Body of pancreas (tissue), 4 donors: ENCODE measurements at regions of chr15 and their contacts with region 1.

Region 1: DNA sequence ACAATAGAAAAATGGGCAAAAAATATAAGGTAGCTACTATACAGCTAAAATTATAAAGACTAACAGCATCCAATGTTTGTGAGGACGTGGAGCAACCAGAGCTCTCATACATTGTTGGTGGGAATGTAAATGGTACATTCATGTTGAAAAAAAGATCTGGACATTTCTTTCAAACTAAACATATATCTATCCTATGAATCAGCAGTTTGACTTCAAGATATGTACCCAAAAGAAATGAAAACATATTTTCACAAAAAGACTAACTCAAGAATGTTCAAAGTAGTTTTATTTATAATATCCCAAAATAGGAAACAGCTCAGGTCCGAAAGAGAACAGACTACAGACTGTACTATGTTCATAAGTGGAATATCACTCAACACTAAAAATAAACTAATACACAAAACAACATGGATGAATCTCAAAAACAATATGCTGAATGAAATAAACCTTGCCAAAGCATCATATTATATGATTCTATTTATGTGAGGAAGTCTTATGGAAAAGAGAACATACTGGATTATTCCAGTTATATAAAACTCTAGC is 8.8 kb upstream of the TTBK2 start:
- DNase-seq: no peak
- ATAC-seq: no peak
- H3K4me3 ChIP-seq: no peak overlapping the region
- H3K27ac ChIP-seq: no peak overlapping the region
- H3K4me1 ChIP-seq: no peaks in the 10 kb centered on the region
- H3K27me3 ChIP-seq: no peaks in the 10 kb centered on the region
- CTCF ChIP-seq: no peak
- POLR2A ChIP-seq: no peak

Region 2: DNA sequence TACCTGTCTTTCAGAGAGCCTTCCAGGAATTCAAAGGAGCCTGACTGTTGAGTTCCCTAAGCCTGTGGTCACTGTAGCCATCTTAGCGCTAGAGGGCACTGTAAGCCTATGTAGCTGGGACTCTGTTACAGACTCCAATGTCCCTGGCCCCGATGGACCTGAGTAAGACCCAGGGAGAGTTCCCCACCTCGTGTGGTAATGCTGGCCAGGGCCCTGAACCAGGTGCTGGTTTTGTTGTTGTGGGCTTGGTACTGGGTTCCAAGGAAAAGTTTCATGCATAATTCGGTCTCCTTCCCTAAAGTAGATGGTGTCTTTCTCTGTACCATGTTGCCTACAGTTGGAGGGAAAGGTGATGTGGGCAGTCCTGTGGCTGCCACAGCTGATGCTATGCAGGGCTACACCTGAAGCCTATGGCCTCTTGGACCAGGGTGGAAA is 224.9 kb before region 1 on chr15:
- intact Hi-C with region 1: loop called (anchors 5 kb)
- DNase-seq: peak; percentile 78 to 83 (median 80)
- ATAC-seq: peak; percentile 95
- H3K4me3 ChIP-seq: no peak overlapping the region
- H3K27ac ChIP-seq: no peak overlapping the region
- H3K4me1 ChIP-seq: no peaks in the 10 kb centered on the region
- H3K27me3 ChIP-seq: no peaks in the 10 kb centered on the region
- CTCF ChIP-seq: peak; percentile 77 to 89 (median 86)
- POLR2A ChIP-seq: no peak

Region 3: GRCh38 chr15:42808913-42809312 is 120.5 kb before region 1 on chr15:
- intact Hi-C with region 1: no loop called
- DNase-seq: no peak
- ATAC-seq: no peak
- H3K4me3 ChIP-seq: no peak overlapping the region
- H3K27ac ChIP-seq: no peak overlapping the region
- H3K4me1 ChIP-seq: no peaks in the 10 kb centered on the region
- H3K27me3 ChIP-seq: no peaks in the 10 kb centered on the region
- CTCF ChIP-seq: no peak
- POLR2A ChIP-seq: no peak